Tibial artery (tissue), 4 donors: ENCODE measurements at regions of chr19 and their contacts with region 1.

Region 1: DNA sequence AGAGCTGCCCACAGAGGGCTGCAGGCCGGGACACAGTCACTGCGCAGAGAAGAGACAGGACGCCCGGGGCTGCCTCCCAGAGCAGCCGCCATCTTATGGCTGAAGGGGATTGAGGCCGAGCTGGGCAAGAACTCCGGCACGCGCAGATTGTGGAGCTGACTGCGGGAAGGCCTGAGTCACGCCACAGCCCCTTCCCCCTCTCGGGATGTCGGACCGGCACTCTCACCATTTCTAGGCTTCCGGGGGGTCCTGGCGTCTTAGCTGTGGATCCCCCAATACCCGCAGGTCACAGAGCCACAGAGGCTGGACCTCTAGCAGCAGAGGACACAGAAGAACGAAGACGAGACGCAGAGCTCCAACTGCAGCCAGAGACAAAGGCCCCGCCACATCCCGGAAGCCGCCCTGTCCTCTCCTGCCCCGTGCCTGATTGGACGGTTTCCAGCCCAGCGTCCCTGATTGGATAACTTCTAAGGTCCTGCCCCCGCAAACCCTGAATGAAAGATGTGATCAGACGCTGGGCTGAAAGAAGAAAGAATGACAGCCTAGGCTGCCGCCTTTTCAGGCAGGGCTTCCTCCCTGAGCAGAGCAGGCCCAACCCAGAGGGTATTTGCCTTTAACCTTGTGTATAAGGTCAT is at the start of gene ZNF43:
- DNase-seq: peak; percentile 98
- H3K4me3 ChIP-seq: peak within 1 kb of the TSS; percentile 62 to 84
- H3K27ac ChIP-seq: peak within 1 kb of the TSS; percentile 86 to 87
- H3K4me1 ChIP-seq: peaks cover 0 to 12% (median 3%) of the 10 kb centered on the region in 4 donors
- H3K27me3 ChIP-seq: no peaks in the 10 kb centered on the region
- CTCF ChIP-seq: no peak

Region 2: GRCh38 chr19:21767065-21767800 is 68.7 kb before region 1 on chr19 and contains the start of gene ZNF100:
- intact Hi-C with region 1: loop called (anchors 10 kb)
- DNase-seq: peak; percentile 94 to 95
- H3K4me3 ChIP-seq: peak within 1 kb of the TSS; percentile 67 to 70
- H3K27ac ChIP-seq: peak within 1 kb of the TSS; percentile 62 to 91
- H3K4me1 ChIP-seq: peaks cover 0 to 8% (median 4%) of the 10 kb centered on the region in 4 donors
- H3K27me3 ChIP-seq: no peaks in the 10 kb centered on the region
- CTCF ChIP-seq: no peak